Left colon (tissue), 2 donors: ENCODE measurements at regions of chr2 and their contacts with region 1.

Region 1: DNA sequence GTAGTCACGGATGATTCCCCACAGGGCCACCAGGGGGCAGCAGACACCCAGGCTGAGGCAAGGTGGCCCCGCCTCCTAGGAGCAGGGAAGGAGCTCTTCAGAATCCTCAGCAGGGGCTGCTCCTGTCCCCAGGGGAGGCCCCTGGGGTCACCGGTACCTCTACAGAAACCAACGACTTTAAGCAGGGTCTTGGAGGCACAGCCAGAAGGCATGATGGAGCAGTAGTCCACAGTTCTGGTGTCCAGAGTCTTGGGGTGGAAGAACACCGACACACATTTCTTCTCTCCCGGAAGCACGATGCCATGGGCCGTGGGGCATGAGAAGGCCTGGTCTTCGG is 11.5 kb downstream of the CFAP65 start:
- DNase-seq: peak; percentile 62 to 86
- ATAC-seq: peak; percentile 98

Region 2: DNA sequence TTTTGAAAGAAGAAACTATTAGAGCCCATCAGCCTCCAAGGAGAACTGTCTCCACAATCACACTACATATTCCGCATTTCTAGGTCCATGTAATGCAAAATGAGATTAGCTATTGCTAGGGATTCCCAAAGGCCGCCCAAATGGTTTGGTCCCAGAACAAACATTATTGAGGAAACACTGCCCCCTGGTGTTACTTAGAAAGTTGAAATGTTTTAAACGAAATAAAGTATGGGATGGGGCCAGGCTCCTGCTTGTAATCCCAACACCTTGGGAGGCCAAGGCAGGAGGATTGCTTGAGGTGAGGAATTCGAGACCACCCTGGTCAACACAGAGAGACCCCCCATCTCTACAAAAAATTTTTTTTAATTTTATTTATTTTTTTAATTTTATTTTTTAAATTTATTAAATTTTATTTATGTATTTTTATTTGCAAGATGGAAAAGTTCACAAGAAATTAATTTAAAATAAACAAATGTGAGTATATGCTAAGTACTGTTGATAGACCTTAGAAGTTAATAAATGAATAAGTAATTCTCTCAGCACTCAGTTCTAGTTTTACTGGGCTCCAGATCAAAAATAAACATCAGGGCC is 125.4 kb after region 1 on chr2:
- intact Hi-C with region 1: loop called in 1 of 2 experiments (anchors 10 kb)
- DNase-seq: no peak
- ATAC-seq: peak; percentile 75